CD4-positive, alpha-beta memory T cell (primary cell): ENCODE measurements at regions of chr6 and their contacts with region 1.

Region 1: DNA sequence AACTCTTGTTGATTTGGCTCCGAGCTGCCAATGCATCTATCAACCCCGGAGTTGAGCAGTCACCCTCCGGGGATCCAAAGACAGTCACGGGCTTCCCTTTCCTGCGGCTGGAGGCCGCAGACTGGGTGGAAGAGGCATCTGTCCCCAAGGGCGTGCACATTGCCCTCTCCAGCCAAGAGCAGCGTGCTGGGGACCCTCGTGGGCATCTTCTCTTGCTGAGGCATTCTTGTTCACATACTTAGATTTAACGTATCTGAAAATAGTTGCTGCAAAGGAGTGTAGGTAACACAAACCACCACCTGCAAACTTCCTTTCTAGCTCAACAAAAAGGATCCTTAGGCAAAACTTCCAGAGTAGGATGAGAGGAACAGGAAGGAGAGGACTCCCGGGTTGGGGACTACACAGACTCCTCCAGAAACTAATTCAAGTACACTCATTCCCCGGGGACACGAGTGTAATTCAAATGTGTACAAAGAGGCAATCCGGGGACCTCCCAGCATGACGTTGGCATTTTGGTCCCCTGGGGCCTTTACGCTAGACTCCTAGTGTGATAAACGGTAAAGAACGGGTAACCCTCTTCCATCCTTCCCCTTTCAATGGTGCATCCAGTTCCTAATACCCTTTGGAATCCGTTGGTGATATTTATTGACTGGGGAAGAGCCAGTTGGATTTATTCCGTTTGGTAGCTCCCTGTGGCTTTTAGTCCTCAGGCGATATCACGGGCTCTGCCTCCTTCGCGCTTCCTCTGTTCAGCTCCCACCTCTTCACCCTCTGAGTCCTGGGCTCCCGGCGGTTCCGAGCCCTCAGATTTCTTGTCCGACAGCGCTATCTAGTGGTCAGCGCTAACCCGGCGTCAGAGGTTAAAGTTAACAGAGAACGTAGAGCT is 2.7 kb upstream of the COL12A1 start:
- DNase-seq: peak; percentile 73 to 78 (median 74)
- H3K4me3 ChIP-seq: peak overlapping the region; percentile 24 to 30
- H3K4me3 Mint-ChIP-seq: peak overlapping the region; percentile 70 to 91 (median 82)
- H3K27ac ChIP-seq: no peak overlapping the region
- H3K27ac Mint-ChIP-seq: peak overlapping the region in 4 of 7 donors; percentile 48 to 87 (median 54)
- H3K4me1 ChIP-seq: peaks cover 50% of the 10 kb centered on the region
- H3K4me1 Mint-ChIP-seq: peaks cover 35 to 54% (median 47%) of the 10 kb centered on the region in 4 donors
- H3K27me3 ChIP-seq: peaks cover 32% of the 10 kb centered on the region
- H3K27me3 Mint-ChIP-seq: peaks cover 51 to 62% of the 10 kb centered on the region in 2 donors

Region 2: DNA sequence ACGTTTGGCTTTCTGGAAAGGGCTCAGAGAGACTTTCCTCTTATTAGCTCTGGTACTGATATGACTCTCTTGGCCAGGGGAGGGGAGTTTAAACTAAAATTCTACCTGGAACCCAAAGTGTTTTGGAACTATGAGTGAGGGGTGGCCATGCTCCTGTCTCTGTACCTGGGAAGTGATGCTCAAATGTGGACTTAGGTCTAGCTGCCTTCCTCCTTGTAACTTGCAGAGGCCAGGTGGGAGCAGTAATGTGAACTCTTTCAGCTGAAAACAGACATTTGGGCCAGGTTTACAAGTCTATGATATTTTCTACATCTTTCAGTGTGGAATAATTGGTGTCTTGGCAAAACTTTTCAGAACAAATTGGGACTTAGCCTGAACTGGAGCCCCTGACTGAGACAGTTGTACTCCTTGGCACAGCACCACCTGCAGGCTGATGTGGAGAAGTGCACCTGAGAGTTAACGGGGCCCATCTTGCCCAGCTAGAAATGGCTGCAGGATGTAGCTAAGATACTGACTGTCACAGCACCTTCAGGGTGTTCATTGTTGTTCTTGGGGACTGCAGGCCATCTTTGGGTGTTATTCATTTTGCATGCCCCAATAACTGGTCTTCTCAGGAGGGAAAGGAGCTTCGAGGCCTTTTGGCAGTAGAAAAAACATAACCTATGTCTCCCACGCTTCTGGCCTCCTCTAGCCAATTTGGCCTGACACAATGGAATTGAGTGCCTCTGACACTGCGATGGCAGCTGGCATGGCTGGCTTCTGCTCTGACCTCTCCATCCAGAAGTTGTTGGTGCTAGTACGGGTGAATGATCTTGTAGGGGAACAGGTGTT is 1475.5 kb before region 1 on chr6:
- CTCF ChIA-PET with region 1: interaction called, 281 read pairs
- POLR2A ChIA-PET with region 1: interaction called, 3 read pairs
- intact Hi-C with region 1: no loop called
- DNase-seq: peak; percentile 48 to 63 (median 57)
- H3K4me3 ChIP-seq: no peak overlapping the region
- H3K4me3 Mint-ChIP-seq: no peak overlapping the region
- H3K27ac ChIP-seq: no peak overlapping the region
- H3K27ac Mint-ChIP-seq: peak overlapping the region in 1 of 7 donors; percentile 4
- H3K4me1 ChIP-seq: no peaks in the 10 kb centered on the region
- H3K4me1 Mint-ChIP-seq: no peaks in the 10 kb centered on the region
- H3K27me3 ChIP-seq: no peaks in the 10 kb centered on the region
- H3K27me3 Mint-ChIP-seq: peaks cover 3% of the 10 kb centered on the region in 2 donors

Region 3: DNA sequence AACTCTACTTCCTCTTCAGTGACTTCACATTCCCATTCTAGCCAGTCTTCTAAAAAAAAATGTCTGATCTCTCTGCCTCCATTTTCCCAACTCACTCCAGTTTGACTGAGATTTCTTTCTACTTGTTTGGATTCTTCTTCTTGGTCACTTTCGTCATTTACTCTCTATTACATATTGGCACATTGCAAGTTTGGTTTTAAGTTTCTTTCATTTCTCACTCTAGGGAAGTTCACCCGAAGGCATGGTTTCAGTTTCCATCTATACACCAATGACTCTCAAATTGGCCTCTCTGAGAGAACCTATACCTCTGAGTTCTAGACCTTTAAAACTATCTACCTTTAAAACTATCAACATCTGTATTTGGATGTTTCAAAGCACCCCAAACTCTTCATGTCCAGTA is 1461.3 kb before region 1 on chr6:
- CTCF ChIA-PET with region 1: interaction called, 281 read pairs
- POLR2A ChIA-PET with region 1: no interaction called
- intact Hi-C with region 1: no loop called
- DNase-seq: no peak
- H3K4me3 ChIP-seq: no peak overlapping the region
- H3K4me3 Mint-ChIP-seq: no peak overlapping the region
- H3K27ac ChIP-seq: no peak overlapping the region
- H3K27ac Mint-ChIP-seq: no peak overlapping the region
- H3K4me1 ChIP-seq: no peaks in the 10 kb centered on the region
- H3K4me1 Mint-ChIP-seq: no peaks in the 10 kb centered on the region
- H3K27me3 ChIP-seq: no peaks in the 10 kb centered on the region
- H3K27me3 Mint-ChIP-seq: no peaks in the 10 kb centered on the region

Region 4: GRCh38 chr6:73860303-73860702 is 1348.2 kb before region 1 on chr6:
- CTCF ChIA-PET with region 1: interaction called, 89 read pairs
- POLR2A ChIA-PET with region 1: no interaction called
- intact Hi-C with region 1: loop called (anchors 1 kb)
- DNase-seq: no peak
- H3K4me3 ChIP-seq: no peak overlapping the region
- H3K4me3 Mint-ChIP-seq: no peak overlapping the region
- H3K27ac ChIP-seq: no peak overlapping the region
- H3K27ac Mint-ChIP-seq: no peak overlapping the region
- H3K4me1 ChIP-seq: no peaks in the 10 kb centered on the region
- H3K4me1 Mint-ChIP-seq: no peaks in the 10 kb centered on the region
- H3K27me3 ChIP-seq: no peaks in the 10 kb centered on the region
- H3K27me3 Mint-ChIP-seq: peaks cover 0 to 6% of the 10 kb centered on the region in 2 donors

Region 5: GRCh38 chr6:75196081-75196687 is 12.4 kb before region 1 on chr6:
- CTCF ChIA-PET with region 1: interaction called, 40 read pairs
- POLR2A ChIA-PET with region 1: no interaction called
- intact Hi-C with region 1: no loop called
- DNase-seq: no peak
- H3K4me3 ChIP-seq: no peak overlapping the region
- H3K4me3 Mint-ChIP-seq: no peak overlapping the region
- H3K27ac ChIP-seq: no peak overlapping the region
- H3K27ac Mint-ChIP-seq: no peak overlapping the region
- H3K4me1 ChIP-seq: no peaks in the 10 kb centered on the region
- H3K4me1 Mint-ChIP-seq: no peaks in the 10 kb centered on the region
- H3K27me3 ChIP-seq: no peaks in the 10 kb centered on the region
- H3K27me3 Mint-ChIP-seq: peaks cover 12% of the 10 kb centered on the region in 2 donors

Region 6: GRCh38 chr6:75243333-75244062 is 35.0 kb after region 1 on chr6 and contains the start of gene COX7A2:
- CTCF ChIA-PET with region 1: interaction called, 12 read pairs
- POLR2A ChIA-PET with region 1: interaction called, 4 read pairs
- intact Hi-C with region 1: loop called (anchors 1 kb)
- DNase-seq: peak; percentile 84 to 92 (median 87)
- H3K4me3 ChIP-seq: peak within 1 kb of the TSS; percentile 90 to 93
- H3K4me3 Mint-ChIP-seq: peak within 1 kb of the TSS; percentile 96 to 99 (median 98)
- H3K27ac ChIP-seq: peak within 1 kb of the TSS; percentile 96
- H3K27ac Mint-ChIP-seq: peak within 1 kb of the TSS; percentile 91 to 100 (median 99)
- H3K4me1 ChIP-seq: peaks cover 24% of the 10 kb centered on the region
- H3K4me1 Mint-ChIP-seq: peaks cover 14 to 47% (median 24%) of the 10 kb centered on the region in 4 donors
- H3K27me3 ChIP-seq: no peaks in the 10 kb centered on the region
- H3K27me3 Mint-ChIP-seq: peaks cover 4 to 9% of the 10 kb centered on the region in 2 donors
- total RNA-seq, gene COX7A2: 188 to 201 TPM

Region 7: DNA sequence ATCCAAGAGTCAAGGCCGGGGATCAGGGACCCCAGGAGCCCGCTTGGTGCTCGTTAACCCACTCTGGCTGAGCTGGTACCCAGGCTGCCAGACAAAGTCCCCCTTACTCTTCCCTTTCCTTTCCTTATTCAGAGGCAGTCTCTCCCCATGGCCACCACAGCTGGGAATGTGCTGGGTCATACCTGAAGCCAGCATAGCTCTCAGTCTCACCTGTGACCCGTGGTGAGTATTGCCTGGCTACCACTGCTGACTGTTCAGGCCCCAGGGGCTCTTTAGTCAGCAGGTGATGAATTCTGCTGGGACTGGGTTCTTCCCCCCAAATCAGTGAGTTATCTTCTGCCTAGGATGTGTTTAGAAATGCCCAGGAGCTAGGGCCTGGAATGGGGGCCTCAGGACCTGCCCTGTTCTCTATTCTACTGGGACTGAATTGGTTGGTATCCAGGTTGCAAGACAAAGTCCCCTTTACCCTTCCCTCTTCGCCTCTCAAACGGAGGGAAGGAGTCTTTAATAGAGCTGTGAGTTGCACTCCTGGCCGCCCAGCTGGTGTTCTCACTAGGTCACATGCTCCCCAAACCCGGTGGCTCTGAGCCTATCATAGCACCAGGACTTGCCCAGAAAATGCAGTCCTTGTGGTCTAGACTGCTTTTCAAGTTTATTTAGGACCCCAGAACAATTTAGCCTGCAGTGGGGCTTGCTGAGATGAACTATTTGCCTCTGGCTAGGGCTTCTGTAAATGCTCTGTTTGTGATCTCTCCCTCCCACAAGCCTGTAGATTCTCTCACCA is 605.1 kb after region 1 on chr6:
- CTCF ChIA-PET with region 1: no interaction called
- POLR2A ChIA-PET with region 1: no interaction called
- intact Hi-C with region 1: no loop called
- DNase-seq: no peak
- H3K4me3 ChIP-seq: no peak overlapping the region
- H3K4me3 Mint-ChIP-seq: no peak overlapping the region
- H3K27ac ChIP-seq: no peak overlapping the region
- H3K27ac Mint-ChIP-seq: no peak overlapping the region
- H3K4me1 ChIP-seq: no peaks in the 10 kb centered on the region
- H3K4me1 Mint-ChIP-seq: peaks cover 0 to 3% (median 0%) of the 10 kb centered on the region in 4 donors
- H3K27me3 ChIP-seq: no peaks in the 10 kb centered on the region
- H3K27me3 Mint-ChIP-seq: no peaks in the 10 kb centered on the region